Activated CD4-positive, alpha-beta T cell treated with anti-CD3 and anti-CD28 coated beads for 36 hours (primary cell): ENCODE measurements at regions of chrX and their contacts with region 1.

Region 1: GRCh38 chrX:2690856-2691542 is at the start of gene CD99:
- DNase-seq: peak; percentile 91
- ATAC-seq: peak; percentile 79
- H3K4me3 Mint-ChIP-seq: peak within 1 kb of the TSS; percentile 95
- H3K27ac Mint-ChIP-seq: peak within 1 kb of the TSS; percentile 100
- H3K4me1 Mint-ChIP-seq: peaks cover 34% of the 10 kb centered on the region
- H3K27me3 Mint-ChIP-seq: no peaks in the 10 kb centered on the region
- total RNA-seq, gene CD99: 169 to 216 TPM

Region 2: DNA sequence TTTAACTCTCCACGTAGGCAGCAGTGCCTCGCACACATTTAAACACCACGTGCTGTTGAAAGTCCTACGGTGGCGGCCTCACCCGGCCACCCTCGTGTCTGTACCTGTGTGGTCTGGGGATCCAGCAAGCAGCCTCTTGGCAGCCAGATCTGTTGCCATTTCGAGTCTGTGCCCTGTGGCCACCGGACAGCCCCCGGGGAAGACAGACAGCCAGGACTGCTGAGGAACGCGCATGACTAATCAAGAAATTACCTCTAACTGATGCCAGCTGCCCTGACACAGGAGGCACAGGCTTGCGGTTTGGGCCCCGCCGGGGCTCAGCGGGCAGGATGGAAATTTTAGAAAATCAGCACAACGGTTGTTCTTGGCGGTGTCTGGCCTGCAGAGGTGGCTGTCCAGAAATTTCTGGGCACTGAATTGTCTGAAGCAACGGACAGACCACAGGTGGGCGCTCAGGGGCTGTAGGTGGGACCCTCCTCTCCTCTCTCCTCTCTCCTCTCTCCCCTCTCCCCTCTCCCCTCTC is 1222.7 kb before region 1 on chrX:
- CTCF ChIA-PET with region 1: no interaction called
- POLR2A ChIA-PET with region 1: no interaction called
- intact Hi-C with region 1: loop called (anchors 2 to 10 kb)
- DNase-seq: peak; percentile 91
- ATAC-seq: peak; percentile 75
- H3K4me3 Mint-ChIP-seq: peak overlapping the region; percentile 54
- H3K27ac Mint-ChIP-seq: peak overlapping the region; percentile 84
- H3K4me1 Mint-ChIP-seq: peaks cover 87% of the 10 kb centered on the region
- H3K27me3 Mint-ChIP-seq: no peaks in the 10 kb centered on the region

Region 3: DNA sequence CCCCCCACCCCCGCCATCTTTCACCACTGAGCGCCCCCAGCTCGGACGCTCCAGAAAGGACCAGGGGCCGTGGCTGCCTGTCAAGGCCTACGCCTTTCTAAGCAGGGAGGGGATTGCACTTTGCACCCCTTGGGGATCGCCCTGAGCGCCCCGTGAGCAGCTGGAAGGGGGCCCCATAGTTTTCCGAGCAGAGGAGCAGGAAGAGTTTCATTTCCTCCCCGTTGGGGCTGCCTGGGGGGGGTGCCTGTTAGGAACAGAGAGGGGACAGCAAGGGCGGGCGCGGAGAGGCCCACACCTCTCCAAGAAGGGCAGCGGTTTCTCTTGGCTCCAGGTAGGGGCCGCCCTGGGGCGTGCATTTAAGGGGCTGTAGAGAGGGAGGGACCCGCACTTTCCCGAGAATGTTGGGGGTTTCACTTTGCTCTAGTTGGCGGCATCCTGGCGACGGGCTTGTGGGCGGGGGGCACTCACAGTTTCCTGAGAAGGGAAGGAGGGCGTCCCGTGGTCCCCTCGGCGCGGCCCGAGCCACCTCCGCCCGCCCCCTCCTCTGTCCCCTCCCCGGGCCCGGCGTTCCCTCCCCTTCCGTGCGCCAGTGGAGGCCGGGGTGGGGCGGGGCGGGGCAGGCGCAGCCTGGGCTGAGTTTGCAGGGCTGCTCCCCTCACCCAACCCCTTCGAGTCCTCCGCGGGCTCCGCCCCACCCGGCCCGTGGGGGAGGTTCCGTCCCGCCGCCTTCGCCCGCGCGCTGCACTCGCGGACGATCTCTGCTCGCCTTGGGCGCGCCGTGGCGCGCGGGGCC is 82.2 kb before region 1 on chrX:
- CTCF ChIA-PET with region 1: no interaction called
- POLR2A ChIA-PET with region 1: no interaction called
- intact Hi-C with region 1: loop called in 1 of 2 experiments (anchors 1 kb)
- DNase-seq: peak; percentile 93
- ATAC-seq: peak; percentile 94
- H3K4me3 Mint-ChIP-seq: peak overlapping the region; percentile 83
- H3K27ac Mint-ChIP-seq: peak overlapping the region; percentile 82
- H3K4me1 Mint-ChIP-seq: peaks cover 47% of the 10 kb centered on the region
- H3K27me3 Mint-ChIP-seq: no peaks in the 10 kb centered on the region